ENCODE measurements at regions of chr10 and their contacts with region 1.

Region 1: DNA sequence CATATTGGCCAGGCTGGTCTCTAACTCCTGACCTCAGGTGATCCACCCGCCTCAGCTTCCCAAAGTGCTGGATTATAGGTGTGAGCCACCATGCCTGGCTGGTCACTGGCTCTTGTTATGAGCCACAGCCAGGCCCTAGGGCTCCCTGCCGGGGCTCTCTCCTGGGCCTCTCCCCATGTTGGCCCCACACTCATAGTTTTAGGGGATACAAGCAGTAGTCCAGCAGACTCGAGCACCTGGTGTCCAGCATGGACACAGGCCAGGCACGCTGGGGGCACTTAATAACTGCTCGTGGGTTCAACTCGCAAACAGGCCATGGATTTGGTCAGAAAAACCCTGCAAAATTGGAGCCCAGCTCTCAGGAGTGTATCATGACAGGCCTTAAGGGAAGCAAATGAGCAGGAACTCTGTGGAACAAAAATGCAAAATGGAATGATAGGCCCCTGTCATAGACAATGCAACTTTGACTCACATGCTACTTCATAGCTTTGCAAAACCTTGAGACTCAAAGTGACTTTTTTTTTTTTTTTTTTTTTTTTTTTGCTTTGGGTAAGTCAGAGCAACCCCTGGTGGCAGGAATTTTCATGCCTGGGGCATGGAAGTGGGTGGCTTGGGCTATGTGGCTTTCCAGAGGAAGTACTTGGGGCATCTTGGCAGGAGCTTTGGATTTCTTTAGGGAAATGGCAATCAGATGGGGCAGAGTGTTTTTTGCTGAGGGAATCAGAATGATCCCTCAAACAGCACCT is 62.5 kb downstream of the TACC2 start:
- DNase-seq: peak; percentile 69
- ATAC-seq: peak; percentile 68
- H3K4me3 Mint-ChIP-seq: no peak overlapping the region
- H3K27ac Mint-ChIP-seq: no peak overlapping the region
- H3K4me1 Mint-ChIP-seq: peaks cover 24% of the 10 kb centered on the region
- H3K27me3 Mint-ChIP-seq: no peaks in the 10 kb centered on the region; the same call in 1 of the 2 replicates
- CTCF ChIP-seq: peak; percentile 44; the same call in 1 of the 2 replicates

Region 2: DNA sequence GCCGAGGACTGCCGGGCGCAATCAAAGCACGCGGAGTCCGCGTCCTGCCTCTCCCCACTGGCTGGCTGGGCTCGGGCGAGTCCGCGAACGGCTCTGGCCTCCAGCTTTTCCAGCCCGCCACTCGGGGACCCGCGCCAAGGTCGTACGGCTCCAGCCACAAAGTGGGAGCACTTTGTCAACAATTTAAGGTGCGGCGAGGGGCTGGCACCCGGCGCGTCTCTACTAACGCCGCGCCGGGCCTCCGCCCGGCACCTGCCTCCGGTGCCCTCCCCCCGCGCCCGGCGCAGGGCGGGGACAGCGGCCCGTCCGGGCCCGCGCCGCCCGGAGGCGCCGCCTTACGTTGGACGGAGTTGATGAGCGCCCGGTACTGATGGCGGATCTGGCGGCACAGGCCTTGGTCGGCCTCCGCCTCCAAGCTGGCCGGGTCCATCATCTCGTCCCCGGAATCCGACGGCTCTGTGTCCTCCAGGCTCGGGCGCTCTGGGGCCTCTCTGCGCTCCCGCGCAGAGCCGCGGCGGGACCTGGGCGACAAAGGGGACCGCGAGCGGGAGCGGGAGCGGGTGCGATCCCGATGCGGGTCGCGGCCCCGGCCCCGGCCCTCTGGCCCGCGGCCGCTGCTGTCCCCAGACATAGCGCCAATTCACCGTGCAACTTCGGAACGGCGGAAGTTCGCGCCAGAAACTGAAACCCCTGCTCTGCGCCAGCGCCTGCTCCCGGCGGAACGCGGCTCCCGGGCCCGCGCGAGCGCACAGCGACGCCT is 76.7 kb before region 1 on chr10 and contains the start of gene NSMCE4A:
- CTCF ChIA-PET with region 1: interaction called, 10 read pairs
- POLR2A ChIA-PET with region 1: no interaction called
- DNase-seq: peak; percentile 82
- ATAC-seq: peak; percentile 73
- H3K4me3 Mint-ChIP-seq: peak within 1 kb of the TSS; percentile 82
- H3K27ac Mint-ChIP-seq: 0 out of 2 replicates have a peak within 1 kb of the TSS, but pooled peaks have one; percentile 32
- H3K4me1 Mint-ChIP-seq: peaks cover 9% of the 10 kb centered on the region
- H3K27me3 Mint-ChIP-seq: peaks cover 2% of the 10 kb centered on the region; the same call in 1 of the 2 replicates
- CTCF ChIP-seq: no peak
- total RNA-seq, gene NSMCE4A: 61.8 to 64.9 TPM (median 64.4 TPM) in 3 replicates

Region 3: GRCh38 chr10:122040786-122041185 is 10.6 kb before region 1 on chr10:
- CTCF ChIA-PET with region 1: interaction called, 35 read pairs
- POLR2A ChIA-PET with region 1: no interaction called
- DNase-seq: no peak
- ATAC-seq: no peak
- H3K4me3 Mint-ChIP-seq: no peak overlapping the region
- H3K27ac Mint-ChIP-seq: no peak overlapping the region
- H3K4me1 Mint-ChIP-seq: peaks cover 20% of the 10 kb centered on the region
- H3K27me3 Mint-ChIP-seq: no peaks in the 10 kb centered on the region
- CTCF ChIP-seq: no peak

Region 4: GRCh38 chr10:122062831-122063674 is 11.6 kb after region 1 on chr10:
- CTCF ChIA-PET with region 1: interaction called, 22 read pairs
- POLR2A ChIA-PET with region 1: no interaction called
- DNase-seq: peak; percentile 39
- ATAC-seq: peak; percentile 96
- H3K4me3 Mint-ChIP-seq: no peak overlapping the region
- H3K27ac Mint-ChIP-seq: peak overlapping the region; percentile 84
- H3K4me1 Mint-ChIP-seq: peaks cover 18% of the 10 kb centered on the region
- H3K27me3 Mint-ChIP-seq: no peaks in the 10 kb centered on the region
- CTCF ChIP-seq: no peak

Region 5: DNA sequence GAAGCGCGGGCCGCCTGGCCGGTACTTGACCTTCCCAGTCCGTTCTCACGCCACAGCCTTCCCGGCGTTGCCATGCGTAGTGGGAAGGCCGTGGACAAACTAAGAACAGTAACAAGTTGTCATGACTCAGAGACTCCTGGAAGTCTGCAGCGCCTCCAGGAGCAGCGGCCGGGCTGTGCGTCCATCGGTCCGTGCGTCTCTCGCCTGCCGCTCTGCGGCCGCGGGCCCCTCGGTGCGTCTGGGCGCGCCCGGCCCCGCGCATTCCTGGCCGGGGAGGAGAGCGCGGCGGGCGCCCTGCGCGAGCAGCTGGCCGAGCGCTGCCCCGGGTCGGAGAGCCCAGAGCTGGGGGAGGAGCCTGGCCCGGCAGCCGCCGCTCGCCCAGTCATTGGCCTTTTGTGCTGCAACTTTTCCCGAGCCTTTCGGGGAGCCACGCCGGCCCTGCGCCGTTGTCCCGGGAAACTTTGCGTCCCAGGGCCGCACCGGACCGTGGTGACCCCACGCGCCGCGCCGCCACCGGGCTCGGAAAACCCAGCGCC is 61.3 kb after region 1 on chr10:
- CTCF ChIA-PET with region 1: interaction called, 10 read pairs
- POLR2A ChIA-PET with region 1: interaction called, 3 read pairs
- DNase-seq: peak; percentile 76
- ATAC-seq: peak; percentile 92
- H3K4me3 Mint-ChIP-seq: peak overlapping the region; percentile 67
- H3K27ac Mint-ChIP-seq: no peak overlapping the region
- H3K4me1 Mint-ChIP-seq: peaks cover 36% of the 10 kb centered on the region
- H3K27me3 Mint-ChIP-seq: peaks cover 3% of the 10 kb centered on the region
- CTCF ChIP-seq: no peak

Region 6: GRCh38 chr10:122142641-122143237 is 91.3 kb after region 1 on chr10:
- CTCF ChIA-PET with region 1: interaction called, 16 read pairs
- POLR2A ChIA-PET with region 1: interaction called, 7 read pairs
- DNase-seq: peak; percentile 90
- ATAC-seq: peak; percentile 85
- H3K4me3 Mint-ChIP-seq: no peak overlapping the region
- H3K27ac Mint-ChIP-seq: no peak overlapping the region; the same call in 1 of the 2 replicates
- H3K4me1 Mint-ChIP-seq: peaks cover 13% of the 10 kb centered on the region
- H3K27me3 Mint-ChIP-seq: no peaks in the 10 kb centered on the region; the same call in 1 of the 2 replicates
- CTCF ChIP-seq: peak; percentile 98

Region 7: DNA sequence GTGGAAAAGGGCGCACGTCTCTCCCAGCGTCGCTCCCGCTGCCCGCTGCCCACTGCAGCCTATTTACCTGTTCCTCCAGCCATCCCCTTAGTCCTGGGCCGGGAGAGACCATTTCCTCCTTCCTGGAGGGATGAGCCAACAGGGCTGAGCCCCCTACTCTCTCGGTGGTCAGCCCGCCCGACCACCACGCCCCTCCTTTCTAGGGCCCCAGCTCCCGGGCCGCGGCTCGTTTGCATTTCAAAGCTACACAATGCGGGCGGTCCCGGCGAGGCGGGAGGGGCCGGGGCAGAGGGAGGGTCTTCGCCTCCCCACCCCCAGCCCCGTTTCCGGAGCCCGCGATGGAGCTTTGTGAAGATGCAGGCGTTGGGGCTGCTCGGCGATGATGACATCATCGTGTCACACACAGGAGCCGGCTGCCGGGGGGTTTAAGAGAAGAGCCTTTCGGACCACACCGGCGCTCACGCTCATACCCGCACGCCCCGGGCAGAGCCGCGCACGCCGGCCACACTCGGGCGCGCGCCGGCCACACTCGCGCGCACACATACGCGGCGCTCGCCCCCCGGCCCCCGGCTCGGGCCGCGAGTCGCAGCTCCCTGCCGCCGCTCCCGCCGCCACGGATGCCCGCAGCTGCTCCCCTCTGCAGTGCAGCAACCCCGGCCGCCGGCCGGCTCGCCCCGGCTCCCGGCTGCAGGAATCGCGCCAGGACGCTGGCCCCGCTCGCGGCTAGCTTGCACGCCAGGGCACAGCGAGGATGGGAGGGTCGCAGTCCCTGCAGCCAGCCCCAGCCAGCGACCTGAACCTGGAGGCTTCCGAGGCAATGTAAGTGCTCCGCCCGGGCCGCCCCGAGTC is 112.0 kb after region 1 on chr10:
- CTCF ChIA-PET with region 1: interaction called, 15 read pairs
- POLR2A ChIA-PET with region 1: interaction called, 5 read pairs
- DNase-seq: peak; percentile 92
- ATAC-seq: peak; percentile 78
- H3K4me3 Mint-ChIP-seq: peak overlapping the region; percentile 86
- H3K27ac Mint-ChIP-seq: peak overlapping the region; percentile 92
- H3K4me1 Mint-ChIP-seq: peaks cover 73% of the 10 kb centered on the region
- H3K27me3 Mint-ChIP-seq: peaks cover 8% of the 10 kb centered on the region; the same call in 1 of the 2 replicates
- CTCF ChIP-seq: no peak

Measured in WTC11 (cell line).